CD8-positive, alpha-beta T cell (primary cell): ENCODE measurements at regions of chr16 and their contacts with region 1.

Region 1: DNA sequence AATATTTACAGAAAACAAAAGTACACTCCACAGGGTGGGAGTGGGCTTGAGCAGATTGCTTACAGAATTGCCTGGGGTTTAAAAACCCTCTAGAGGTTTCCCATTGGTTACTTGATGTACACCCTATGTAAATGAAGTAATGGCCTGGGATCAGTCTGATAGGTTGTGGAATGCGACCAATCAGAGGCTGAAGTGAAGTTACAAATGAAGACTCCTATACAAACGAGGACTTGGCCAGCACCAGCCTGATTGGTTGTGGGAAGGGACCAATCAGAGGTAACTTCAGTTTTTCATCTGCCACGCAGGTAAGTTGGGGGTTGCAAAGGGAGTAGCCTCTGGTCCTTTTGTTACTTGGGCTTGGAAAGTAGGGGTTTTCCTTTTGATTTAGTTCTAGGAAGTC is 8.8 kb downstream of the EEF2K start:
- DNase-seq: no peak
- ATAC-seq: no peak
- H3K4me3 ChIP-seq: no peak overlapping the region
- H3K4me3 Mint-ChIP-seq: no peak overlapping the region
- H3K27ac ChIP-seq: no peak overlapping the region
- H3K27ac Mint-ChIP-seq: no peak overlapping the region
- H3K4me1 ChIP-seq: no peaks in the 10 kb centered on the region
- H3K4me1 Mint-ChIP-seq: peaks cover 25% of the 10 kb centered on the region
- H3K27me3 ChIP-seq: no peaks in the 10 kb centered on the region
- H3K27me3 Mint-ChIP-seq: no peaks in the 10 kb centered on the region
- CTCF ChIP-seq: no peak

Region 2: GRCh38 chr16:22250522-22250921 is 35.6 kb after region 1 on chr16:
- CTCF ChIA-PET with region 1: no interaction called
- POLR2A ChIA-PET with region 1: no interaction called
- intact Hi-C with region 1: loop called in 1 of 2 experiments (anchors 5 kb)
- DNase-seq: no peak
- ATAC-seq: no peak
- H3K4me3 ChIP-seq: no peak overlapping the region
- H3K4me3 Mint-ChIP-seq: no peak overlapping the region
- H3K27ac ChIP-seq: no peak overlapping the region
- H3K27ac Mint-ChIP-seq: no peak overlapping the region
- H3K4me1 ChIP-seq: no peaks in the 10 kb centered on the region
- H3K4me1 Mint-ChIP-seq: peaks cover 10% of the 10 kb centered on the region
- H3K27me3 ChIP-seq: no peaks in the 10 kb centered on the region
- H3K27me3 Mint-ChIP-seq: no peaks in the 10 kb centered on the region
- CTCF ChIP-seq: no peak

Region 3: GRCh38 chr16:22357635-22357971 is 142.7 kb after region 1 on chr16:
- CTCF ChIA-PET with region 1: no interaction called
- POLR2A ChIA-PET with region 1: no interaction called
- intact Hi-C with region 1: no loop called
- DNase-seq: peak in 2 of 9 experiments; percentile 39 to 65
- ATAC-seq: peak; percentile 48
- H3K4me3 ChIP-seq: no peak overlapping the region
- H3K4me3 Mint-ChIP-seq: peak overlapping the region; percentile 46
- H3K27ac ChIP-seq: peak overlapping the region; percentile 56 to 86
- H3K27ac Mint-ChIP-seq: peak overlapping the region; percentile 90
- H3K4me1 ChIP-seq: peaks cover 74% of the 10 kb centered on the region
- H3K4me1 Mint-ChIP-seq: peaks cover 78% of the 10 kb centered on the region
- H3K27me3 ChIP-seq: no peaks in the 10 kb centered on the region
- H3K27me3 Mint-ChIP-seq: no peaks in the 10 kb centered on the region
- CTCF ChIP-seq: no peak